Breast epithelium (tissue), 4 donors: ENCODE measurements at regions of chr13 and their contacts with region 1.

Region 1: DNA sequence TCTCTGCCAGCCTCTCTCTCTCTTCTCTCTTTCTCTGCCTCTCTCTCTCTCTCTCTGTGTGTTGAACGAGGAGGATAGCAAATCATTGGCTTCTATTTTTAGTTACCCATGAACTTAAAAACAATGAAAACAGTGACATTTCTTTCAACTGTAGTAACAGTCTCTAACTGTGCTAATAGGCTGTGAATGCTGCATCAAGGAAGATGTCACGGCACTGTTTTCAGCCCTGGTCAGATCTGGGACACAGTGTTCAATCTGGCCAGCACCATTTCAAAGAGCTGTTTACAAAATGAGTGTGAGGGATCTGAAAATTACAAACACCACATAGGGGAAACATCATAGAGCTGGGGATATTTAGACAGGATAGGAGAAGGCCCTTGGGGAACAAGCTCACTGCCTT is 717.0 kb downstream of the FGF9 start:
- DNase-seq: no peak
- H3K4me3 ChIP-seq: no peak overlapping the region
- H3K27ac ChIP-seq: no peak overlapping the region
- H3K4me1 ChIP-seq: no peaks in the 10 kb centered on the region
- H3K27me3 ChIP-seq: no peaks in the 10 kb centered on the region
- CTCF ChIP-seq: no peak
- POLR2A ChIP-seq: no peak

Region 2: GRCh38 chr13:21696858-21697448 is 690.9 kb before region 1 on chr13:
- intact Hi-C with region 1: loop called (anchors 5 kb)
- DNase-seq: no peak
- H3K4me3 ChIP-seq: no peak overlapping the region
- H3K27ac ChIP-seq: no peak overlapping the region
- H3K4me1 ChIP-seq: no peaks in the 10 kb centered on the region
- H3K27me3 ChIP-seq: no peaks in the 10 kb centered on the region
- CTCF ChIP-seq: no peak
- POLR2A ChIP-seq: no peak

Region 3: DNA sequence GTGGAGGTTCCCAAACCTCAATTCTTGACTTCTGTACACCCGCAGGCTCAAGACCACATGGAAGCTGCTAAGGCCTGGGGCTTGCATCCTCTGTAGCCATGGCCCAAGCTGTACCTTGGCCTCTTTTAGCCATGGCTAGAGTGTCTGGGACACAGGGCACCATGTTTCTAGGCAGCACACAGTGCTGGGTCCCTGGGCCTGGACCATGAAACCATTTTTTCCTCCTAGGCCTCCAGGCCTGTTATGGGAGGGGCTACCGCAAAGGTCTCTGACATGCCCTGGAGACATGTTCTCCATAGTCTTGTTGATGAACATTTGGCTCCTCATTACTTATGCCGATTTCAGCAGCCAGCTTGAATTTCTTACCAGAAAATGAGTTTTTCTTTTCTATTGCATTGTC is 15.6 kb before region 1 on chr13:
- intact Hi-C with region 1: no loop called
- DNase-seq: no peak
- H3K4me3 ChIP-seq: no peak overlapping the region
- H3K27ac ChIP-seq: no peak overlapping the region
- H3K4me1 ChIP-seq: no peaks in the 10 kb centered on the region
- H3K27me3 ChIP-seq: no peaks in the 10 kb centered on the region
- CTCF ChIP-seq: no peak
- POLR2A ChIP-seq: no peak